GM18951 (cell line): ENCODE measurements at regions of chr3 and their contacts with region 1.

Region 1: GRCh38 chr3:100316641-100317069 is 17.9 kb upstream of the NIT2 start:
- POLR2A ChIP-seq: no peak

Region 2: GRCh38 chr3:100590114-100590839 is 273.6 kb after region 1 on chr3:
- in situ Hi-C with region 1: loop called (anchors 10 kb)
- POLR2A ChIP-seq: no peak